Motor neuron (in vitro differentiated cells): ENCODE measurements at regions of chr18 and their contacts with region 1.

Region 1: DNA sequence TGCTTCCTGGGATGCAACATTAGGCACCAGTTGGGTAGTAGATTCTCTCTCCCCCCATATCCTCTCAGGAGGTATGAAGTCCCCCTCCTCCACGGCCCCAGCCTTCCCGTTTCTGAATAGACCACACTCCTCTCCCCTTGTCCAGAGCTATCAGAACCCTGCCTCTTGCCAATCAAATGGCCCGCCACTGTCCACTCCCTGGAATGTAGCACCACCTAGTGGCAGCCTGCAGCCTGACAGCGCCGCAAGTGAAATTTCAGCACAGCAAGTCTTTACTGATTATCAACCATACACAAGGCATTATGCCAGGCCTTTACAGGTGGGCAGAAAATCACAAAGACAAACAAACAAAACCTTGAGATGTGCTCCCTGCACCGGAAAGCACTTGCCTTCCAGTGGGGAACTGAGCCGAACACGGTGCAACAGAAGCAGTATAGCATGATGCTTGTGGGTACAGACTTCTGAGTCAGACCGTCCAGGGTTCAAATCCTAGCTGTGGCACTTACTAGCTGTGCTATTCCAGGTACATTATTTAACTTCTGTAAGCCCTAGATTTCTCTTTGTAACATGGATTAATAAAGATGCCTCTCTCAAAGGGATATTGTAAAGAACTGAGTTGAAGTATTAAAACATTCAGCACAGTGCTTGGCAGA is 174.0 kb downstream of the SMAD2 start:
- ATAC-seq: peak; percentile 49 to 86 (median 61)
- H3K4me3 ChIP-seq: no peak overlapping the region
- H3K27ac ChIP-seq: no peak overlapping the region
- H3K4me1 ChIP-seq: no peaks in the 10 kb centered on the region

Region 2: GRCh38 chr18:47215554-47216138 is 540.8 kb before region 1 on chr18:
- in situ Hi-C with region 1: loop called in 5 of 9 experiments (anchors 10 to 25 kb)
- ATAC-seq: peak; percentile 63 to 93 (median 78)
- H3K4me3 ChIP-seq: no peak overlapping the region
- H3K27ac ChIP-seq: no peak overlapping the region
- H3K4me1 ChIP-seq: no peaks in the 10 kb centered on the region

Region 3: DNA sequence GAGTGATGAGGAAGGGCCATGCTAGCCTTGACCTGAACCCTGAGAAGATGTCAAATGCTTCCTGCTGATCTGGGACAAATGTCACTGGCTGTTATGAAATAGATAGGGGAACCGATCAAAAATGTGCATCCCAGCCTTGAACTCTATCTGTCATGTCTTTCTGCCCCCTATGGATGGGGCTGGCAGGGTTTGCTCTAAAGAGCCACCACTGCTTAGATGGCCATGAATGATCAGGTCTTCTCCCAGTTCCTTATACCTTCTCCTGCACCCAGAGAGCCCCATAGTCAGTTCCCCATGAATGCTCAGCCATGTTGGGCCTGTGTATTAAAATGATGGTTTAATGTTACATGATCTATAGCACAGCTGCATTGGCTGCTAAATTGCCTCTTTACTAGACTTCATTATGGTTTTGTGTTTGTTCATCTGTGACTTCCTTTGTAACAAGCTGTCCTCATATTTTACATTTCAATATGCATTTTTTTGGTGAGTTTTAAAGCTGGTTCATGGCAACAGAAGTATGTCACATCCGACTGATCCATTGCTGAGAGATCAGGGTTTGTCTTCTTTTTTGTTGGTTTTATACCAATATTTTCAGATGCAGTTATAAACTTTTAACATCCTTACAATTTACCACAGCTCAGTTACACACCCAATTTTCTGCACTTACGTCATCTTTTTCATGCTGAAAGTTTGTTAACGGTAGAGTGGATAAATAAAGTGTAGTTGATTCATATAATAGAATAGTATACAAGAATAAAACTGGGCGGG is 230.3 kb after region 1 on chr18:
- in situ Hi-C with region 1: no loop called
- ATAC-seq: peak in 1 of 8 experiments; percentile 15
- H3K4me3 ChIP-seq: no peak overlapping the region
- H3K27ac ChIP-seq: no peak overlapping the region
- H3K4me1 ChIP-seq: peaks cover 13 to 14% of the 10 kb centered on the region in 2 donors

Region 4: DNA sequence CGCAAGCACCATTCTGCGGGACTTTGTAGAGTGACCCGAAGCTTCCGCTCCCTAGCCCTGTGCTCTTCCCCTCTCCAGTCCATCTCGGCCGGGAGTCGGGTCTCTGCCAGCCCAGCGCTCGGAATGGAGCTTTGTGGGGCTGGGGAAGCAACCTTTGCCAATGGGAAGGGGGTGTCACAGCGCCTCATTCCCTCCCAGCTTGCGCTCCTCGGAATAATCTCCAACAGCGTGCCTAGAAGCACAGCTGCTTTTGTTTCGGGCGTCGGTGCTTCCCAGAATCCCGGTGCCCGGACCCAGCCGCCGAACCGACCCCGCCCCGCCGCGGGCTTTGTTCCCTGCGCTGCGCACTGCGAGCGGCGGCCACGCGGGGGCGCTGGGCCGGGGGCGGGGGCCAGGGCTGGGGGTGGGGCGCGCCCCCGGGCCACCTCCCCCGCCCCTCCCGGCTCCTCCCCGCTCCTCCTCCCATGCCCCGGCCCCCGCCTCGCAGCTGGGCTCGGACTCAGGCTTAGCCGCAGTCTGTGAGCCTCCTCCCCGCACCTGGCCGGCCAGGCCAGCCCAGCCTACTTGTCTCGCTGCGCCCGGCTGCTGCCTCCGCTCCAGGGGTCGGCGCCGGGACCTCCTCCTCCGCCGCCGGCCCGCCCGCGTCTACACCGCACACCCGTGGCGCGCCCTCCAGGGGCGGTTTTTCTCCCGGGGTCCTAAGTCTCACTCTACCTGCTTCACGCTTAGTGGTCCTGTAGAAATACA is 251.6 kb after region 1 on chr18:
- in situ Hi-C with region 1: loop called in 1 of 9 experiments (anchors 25 kb)
- ATAC-seq: peak; percentile 81 to 95 (median 92)
- H3K4me3 ChIP-seq: peak overlapping the region; percentile 25 to 44 (median 39)
- H3K27ac ChIP-seq: no peak overlapping the region
- H3K4me1 ChIP-seq: peaks cover 0 to 4% of the 10 kb centered on the region in 2 donors